Head of caudate nucleus (tissue), 42 donors: ENCODE measurements at regions of chr1 and their contacts with region 1.

Region 1: DNA sequence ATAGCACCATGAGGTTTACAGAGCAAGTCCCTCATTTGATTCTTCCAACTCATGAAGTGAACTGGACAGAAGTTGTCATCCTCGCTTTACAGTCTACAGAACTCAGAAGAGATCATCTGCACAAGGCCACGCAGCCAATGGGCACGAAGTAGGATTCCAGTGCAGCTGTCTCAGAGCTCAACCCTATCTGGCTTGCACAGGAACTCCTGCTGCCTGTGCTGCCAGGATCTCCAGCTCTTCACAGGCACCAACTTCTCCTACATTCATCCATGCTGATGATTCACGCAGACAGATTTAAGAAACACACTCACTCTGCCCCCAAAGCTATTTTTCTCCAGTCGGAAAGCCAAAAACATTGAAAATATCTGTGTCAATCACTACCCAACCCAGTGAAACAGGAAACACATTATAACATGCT is 157.0 kb downstream of the RERE start:
- DNase-seq: peak; percentile 37 to 90 (median 66)

Region 2: GRCh38 chr1:8625981-8626898 is 34.2 kb before region 1 on chr1:
- intact Hi-C with region 1: no loop called
- DNase-seq: no peak

Region 3: GRCh38 chr1:8727809-8728213 is 67.4 kb after region 1 on chr1:
- intact Hi-C with region 1: loop called (anchors 10 kb)
- DNase-seq: peak in 27 of 42 donors; percentile 8 to 62 (median 38)